AG04449 (cell line): ENCODE measurements at regions of chr3 and their contacts with region 1.

Region 1: GRCh38 chr3:8622873-8623691 is 21.5 kb downstream of the SSUH2 start:
- DNase-seq: no peak
- H3K4me3 ChIP-seq: no peak overlapping the region
- CTCF ChIP-seq: peak; percentile 95

Region 2: GRCh38 chr3:8423307-8423706 is 199.8 kb before region 1 on chr3:
- CTCF ChIA-PET with region 1: interaction called, 14 read pairs
- POLR2A ChIA-PET with region 1: no interaction called
- DNase-seq: no peak
- H3K4me3 ChIP-seq: no peak overlapping the region
- CTCF ChIP-seq: no peak

Region 3: DNA sequence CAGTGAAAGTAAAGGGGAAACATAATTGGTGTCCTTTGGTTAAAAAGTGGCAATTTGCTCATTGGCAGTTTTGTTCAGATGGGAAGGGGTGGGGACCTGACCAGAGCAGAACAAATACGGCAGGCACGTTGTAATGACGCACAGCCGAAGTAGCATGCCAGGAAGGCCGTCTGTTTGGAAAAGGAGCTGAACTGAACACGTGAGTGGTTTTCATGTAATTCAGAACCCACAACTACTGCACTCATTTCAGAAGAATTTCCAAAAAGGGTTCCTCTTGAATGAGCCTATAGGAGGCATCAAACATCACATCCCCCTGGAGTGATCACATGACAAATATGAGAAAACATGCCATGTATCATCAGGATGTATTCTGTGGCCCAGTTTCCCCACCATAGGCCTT is 164.4 kb before region 1 on chr3:
- CTCF ChIA-PET with region 1: interaction called, 10 read pairs
- POLR2A ChIA-PET with region 1: interaction called, 3 read pairs
- DNase-seq: peak; percentile 98
- H3K4me3 ChIP-seq: no peak overlapping the region
- CTCF ChIP-seq: no peak

Region 4: DNA sequence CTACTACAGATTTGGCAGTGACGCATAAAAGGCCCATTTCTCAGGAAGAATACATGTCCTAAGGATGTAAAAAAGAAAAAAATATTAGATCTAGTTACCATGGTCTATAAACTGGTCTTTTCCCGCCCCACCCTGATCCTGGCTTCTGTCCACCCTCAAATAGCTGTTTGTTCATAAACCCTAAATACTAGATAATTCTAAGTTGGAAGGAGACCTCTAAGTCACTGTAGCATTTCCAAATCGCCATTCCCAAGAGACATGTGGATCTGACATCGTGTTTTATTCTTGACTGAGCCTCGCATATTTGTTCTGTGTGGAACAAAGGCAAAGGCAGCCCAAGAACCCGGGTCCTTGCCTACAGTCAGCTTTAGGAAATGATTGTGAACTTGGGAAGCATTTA is 72.5 kb before region 1 on chr3:
- CTCF ChIA-PET with region 1: no interaction called
- POLR2A ChIA-PET with region 1: no interaction called
- DNase-seq: no peak
- H3K4me3 ChIP-seq: no peak overlapping the region
- CTCF ChIP-seq: no peak

Region 5: DNA sequence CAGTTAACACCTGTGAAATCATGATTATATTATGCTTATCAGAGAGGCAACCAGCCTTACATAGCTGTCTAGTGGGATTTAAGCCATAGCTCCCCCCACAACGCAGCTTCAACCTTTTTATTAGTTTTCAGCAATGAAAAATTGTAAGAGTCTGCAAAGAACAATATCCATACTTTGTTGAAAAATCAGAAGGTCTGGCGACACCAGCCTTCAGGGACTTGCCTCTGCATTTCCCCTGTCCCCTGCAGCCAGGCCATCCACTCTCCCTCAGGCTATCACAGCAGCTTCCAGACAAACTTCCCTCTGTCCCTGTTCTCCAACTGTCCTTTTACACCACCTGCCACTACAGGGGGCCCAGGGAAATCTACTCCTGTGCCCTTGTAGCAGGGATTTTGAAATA is 38.4 kb before region 1 on chr3:
- CTCF ChIA-PET with region 1: no interaction called
- POLR2A ChIA-PET with region 1: no interaction called
- DNase-seq: no peak
- H3K4me3 ChIP-seq: no peak overlapping the region
- CTCF ChIP-seq: no peak

Region 6: DNA sequence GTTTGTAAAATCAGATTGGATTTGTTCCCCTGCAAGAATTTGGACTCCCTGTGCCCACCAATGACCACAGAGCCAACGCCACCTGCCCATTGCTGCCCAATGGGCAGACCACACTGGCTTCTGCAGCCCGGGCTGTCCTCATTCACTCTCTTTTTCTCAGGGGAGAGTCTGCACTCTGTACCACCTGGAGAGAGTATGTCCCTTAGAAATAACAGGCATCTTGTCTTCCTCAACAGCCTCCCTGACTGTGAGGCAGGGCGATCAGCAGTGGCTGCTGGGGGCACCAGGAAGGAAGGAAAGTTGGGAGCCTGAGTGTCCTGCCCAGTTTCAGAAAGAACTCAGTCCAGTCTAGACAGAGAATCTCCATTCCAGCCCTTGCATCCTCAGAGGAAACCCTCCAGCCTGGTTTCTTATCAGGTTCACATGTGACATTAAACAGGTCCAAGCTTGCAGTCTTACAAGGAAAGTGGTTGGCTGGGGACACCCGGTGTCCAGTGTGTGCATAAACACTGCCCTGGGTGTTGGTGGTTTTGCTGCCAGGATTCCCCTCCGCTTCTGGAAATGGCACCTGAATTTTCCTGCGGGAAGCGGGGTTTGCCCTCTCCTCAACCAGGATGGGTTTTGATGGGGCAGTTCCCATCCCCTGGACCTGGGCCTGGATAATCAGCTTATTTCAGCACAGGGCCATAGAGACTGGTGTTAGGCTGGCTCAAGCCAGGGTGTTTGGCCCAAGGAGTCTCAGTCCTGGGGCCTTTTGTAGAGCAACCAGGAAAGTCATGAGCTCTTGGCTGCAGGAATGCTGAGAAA is 15.6 kb before region 1 on chr3:
- CTCF ChIA-PET with region 1: interaction called, 40 read pairs
- POLR2A ChIA-PET with region 1: no interaction called
- DNase-seq: no peak
- H3K4me3 ChIP-seq: no peak overlapping the region
- CTCF ChIP-seq: peak; percentile 73

Region 7: DNA sequence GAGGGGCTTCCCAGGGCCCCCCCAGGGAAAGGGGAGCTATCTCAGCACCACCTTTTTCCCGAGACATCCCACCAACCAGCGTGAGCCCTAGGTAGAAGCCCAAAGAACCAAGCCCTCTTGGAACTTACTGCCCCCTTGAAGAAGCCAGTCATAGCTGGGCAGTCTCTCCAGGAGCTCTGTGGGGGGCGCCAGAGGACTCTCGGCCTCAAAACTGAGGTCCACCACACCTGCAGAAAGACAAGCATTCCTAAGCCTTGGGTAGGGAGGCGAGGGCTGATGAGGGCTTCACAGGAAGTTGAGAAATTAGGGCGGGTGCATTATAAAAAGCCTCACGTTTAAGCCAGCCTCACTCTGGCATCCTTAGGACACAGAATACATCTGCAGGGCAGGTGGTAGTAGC is 12.5 kb after region 1 on chr3:
- CTCF ChIA-PET with region 1: interaction called, 21 read pairs
- POLR2A ChIA-PET with region 1: no interaction called
- DNase-seq: no peak
- H3K4me3 ChIP-seq: no peak overlapping the region
- CTCF ChIP-seq: no peak